B cell (primary cell): ENCODE measurements at regions of chr17 and their contacts with region 1.

Region 1: GRCh38 chr17:8057691-8058114 is 18.8 kb downstream of the ALOX15B start:
- DNase-seq: peak; percentile 87
- ATAC-seq: peak; percentile 85
- H3K4me3 ChIP-seq: no peak overlapping the region
- H3K4me3 Mint-ChIP-seq: no peak overlapping the region
- H3K27ac ChIP-seq: no peak overlapping the region
- H3K27ac Mint-ChIP-seq: no peak overlapping the region
- H3K4me1 ChIP-seq: peaks cover 22 to 25% of the 10 kb centered on the region in 2 donors
- H3K4me1 Mint-ChIP-seq: peaks cover 29% of the 10 kb centered on the region
- H3K27me3 ChIP-seq: peaks cover 0 to 24% (median 9%) of the 10 kb centered on the region in 4 experiments
- H3K27me3 Mint-ChIP-seq: peaks cover 31% of the 10 kb centered on the region
- CTCF ChIP-seq: peak; percentile 86

Region 2: DNA sequence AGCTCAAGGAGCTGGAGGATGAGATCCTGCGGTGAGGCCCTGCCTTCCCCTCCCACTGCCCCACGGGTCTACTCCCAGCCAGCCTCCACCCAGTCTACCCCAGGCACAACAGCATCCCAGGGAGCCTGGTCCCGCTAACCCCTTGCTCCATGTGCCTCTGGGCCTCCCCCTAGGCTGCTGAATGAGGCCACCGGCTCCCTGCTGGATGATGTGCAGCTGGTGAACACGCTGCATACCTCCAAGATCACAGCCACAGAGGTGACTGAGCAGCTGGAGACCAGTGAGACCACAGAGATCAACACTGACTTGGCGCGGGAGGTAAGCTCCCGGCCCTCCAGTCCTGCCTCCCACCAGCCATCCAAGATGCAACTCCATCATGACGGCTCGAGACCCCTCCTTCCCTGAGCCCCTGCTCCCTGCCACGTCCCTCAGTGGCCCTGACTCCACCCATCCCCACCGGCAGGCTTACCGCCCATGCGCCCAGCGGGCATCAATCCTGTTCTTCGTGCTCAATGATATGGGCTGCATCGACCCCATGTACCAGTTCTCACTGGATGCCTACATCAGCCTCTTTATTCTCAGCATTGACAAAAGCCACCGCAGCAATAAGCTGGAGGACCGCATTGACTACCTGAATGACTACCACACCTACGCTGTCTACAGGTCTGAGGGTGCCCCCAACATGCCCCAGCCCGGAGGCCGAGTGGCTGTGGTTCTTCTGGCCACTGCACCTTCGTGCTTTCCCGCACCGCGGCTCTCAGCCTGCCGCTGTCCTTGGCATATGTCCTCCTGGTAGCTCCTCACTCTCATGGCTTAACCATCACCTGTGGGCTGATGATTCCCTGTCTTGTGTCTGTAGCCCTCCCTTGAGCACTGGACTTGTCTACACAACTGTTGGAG is 238.7 kb before region 1 on chr17:
- CTCF ChIA-PET with region 1: interaction called, 11 read pairs
- POLR2A ChIA-PET with region 1: no interaction called
- intact Hi-C with region 1: loop called (anchors 1 kb)
- DNase-seq: no peak
- ATAC-seq: no peak
- H3K4me3 ChIP-seq: no peak overlapping the region
- H3K4me3 Mint-ChIP-seq: no peak overlapping the region
- H3K27ac ChIP-seq: no peak overlapping the region
- H3K27ac Mint-ChIP-seq: no peak overlapping the region
- H3K4me1 ChIP-seq: no peaks in the 10 kb centered on the region
- H3K4me1 Mint-ChIP-seq: no peaks in the 10 kb centered on the region
- H3K27me3 ChIP-seq: no peaks in the 10 kb centered on the region
- H3K27me3 Mint-ChIP-seq: peaks cover 8% of the 10 kb centered on the region
- CTCF ChIP-seq: no peak

Region 3: DNA sequence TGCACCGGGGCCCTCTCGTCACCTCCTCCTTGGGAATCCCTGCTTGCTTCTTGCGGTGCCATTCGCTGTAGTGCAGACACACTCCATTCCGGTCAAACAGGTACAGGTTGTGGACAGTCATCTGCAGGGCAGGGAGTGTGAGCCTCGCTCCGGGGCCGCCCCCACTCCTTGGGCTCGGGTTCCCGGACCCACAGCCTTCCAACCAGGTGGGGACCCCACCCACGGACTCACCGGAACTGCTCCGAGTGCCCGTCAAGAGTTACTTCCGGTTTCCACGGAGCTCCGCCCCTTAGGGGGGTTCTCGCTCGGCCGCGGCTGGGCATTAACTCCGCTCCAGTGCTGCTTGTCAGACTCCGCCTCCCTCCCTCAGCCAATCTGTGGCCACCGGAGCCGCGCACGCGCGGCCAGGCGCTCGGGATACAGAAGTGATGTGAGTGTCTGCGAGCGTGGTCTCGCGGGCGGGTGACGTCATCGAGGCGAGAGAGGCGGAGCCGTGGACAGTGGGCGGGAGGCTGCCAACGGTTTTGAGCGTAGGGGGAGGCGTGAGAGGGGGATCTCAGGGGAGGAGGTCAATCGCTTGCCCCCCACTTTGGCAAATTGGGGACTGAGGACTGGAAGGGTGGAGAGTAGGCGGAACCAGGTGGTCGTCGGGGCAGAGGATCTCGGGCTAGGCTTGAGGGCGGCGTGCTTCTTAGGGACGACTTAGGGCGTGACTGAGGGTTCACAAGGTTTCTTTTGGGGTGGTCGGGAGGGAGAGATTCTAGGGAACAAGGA is 125.8 kb before region 1 on chr17 and contains the starts of genes CNTROB and TRAPPC1:
- CTCF ChIA-PET with region 1: interaction called, 23 read pairs
- POLR2A ChIA-PET with region 1: no interaction called
- intact Hi-C with region 1: loop called (anchors 5 kb)
- DNase-seq: peak; percentile 100
- ATAC-seq: peak; percentile 98
- H3K4me3 ChIP-seq: peak within 1 kb of the TSS; percentile 75 to 98 (median 89)
- H3K4me3 Mint-ChIP-seq: peak within 1 kb of the TSS; percentile 95
- H3K27ac ChIP-seq: peak within 1 kb of the TSS; percentile 77 to 88
- H3K27ac Mint-ChIP-seq: peak within 1 kb of the TSS; percentile 95
- H3K4me1 ChIP-seq: peaks cover 18 to 33% of the 10 kb centered on the region in 2 donors
- H3K4me1 Mint-ChIP-seq: peaks cover 44% of the 10 kb centered on the region
- H3K27me3 ChIP-seq: no peaks in the 10 kb centered on the region
- H3K27me3 Mint-ChIP-seq: no peaks in the 10 kb centered on the region
- CTCF ChIP-seq: no peak
- total RNA-seq, gene CNTROB: 34.8 and 40.4 TPM in 2 replicates
- total RNA-seq, gene TRAPPC1: 86.0 and 118 TPM in 2 replicates

Region 4: DNA sequence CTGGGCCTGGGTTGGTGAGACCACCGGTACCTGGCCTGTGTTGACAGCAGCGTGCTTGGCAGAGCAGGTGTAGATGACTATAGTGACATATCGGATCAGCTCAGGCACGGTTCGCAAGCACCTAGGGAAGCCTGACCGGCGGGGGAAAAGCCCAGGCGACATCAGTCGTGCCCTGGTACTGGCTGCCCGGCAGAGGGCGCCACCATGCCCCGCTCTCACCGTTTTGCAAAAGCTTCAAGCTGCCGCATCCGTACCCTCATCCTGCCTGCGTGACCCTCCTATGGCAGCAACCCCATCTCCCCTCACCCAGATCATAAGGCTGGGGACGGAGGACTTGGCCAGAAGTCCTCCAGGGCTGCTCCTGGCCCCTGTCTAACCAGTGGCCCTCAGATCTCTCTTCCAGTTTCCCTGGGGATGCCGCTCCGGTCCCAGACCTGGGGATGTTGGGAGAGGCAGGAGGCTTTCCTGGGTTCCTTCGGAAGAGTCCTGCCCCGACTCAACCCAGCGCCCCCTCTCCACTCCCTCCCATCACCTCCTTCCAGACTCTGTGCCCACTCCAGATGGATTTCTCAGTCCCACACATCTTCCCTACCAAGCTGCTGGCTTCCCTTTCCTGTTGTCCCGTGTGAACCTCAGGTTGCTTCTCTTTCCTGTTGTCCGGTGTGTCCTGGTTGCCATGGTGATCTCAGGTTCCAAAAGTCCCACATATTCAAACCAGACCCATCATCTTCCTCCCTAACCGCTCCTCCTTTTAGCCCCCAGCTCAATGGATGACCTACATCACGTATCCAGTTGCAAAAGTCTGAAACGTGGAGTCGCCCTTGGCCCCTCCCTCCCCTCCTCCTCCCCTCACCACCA is 16.2 kb after region 1 on chr17:
- CTCF ChIA-PET with region 1: interaction called, 121 read pairs
- POLR2A ChIA-PET with region 1: interaction called, 4 read pairs
- intact Hi-C with region 1: loop called (anchors 1 kb)
- DNase-seq: peak; percentile 95
- ATAC-seq: peak; percentile 95
- H3K4me3 ChIP-seq: peak overlapping the region in 1 of 5 experiments; percentile 34
- H3K4me3 Mint-ChIP-seq: peak overlapping the region; percentile 81
- H3K27ac ChIP-seq: no peak overlapping the region
- H3K27ac Mint-ChIP-seq: peak overlapping the region; percentile 57
- H3K4me1 ChIP-seq: peaks cover 28 to 29% of the 10 kb centered on the region in 2 donors
- H3K4me1 Mint-ChIP-seq: peaks cover 27% of the 10 kb centered on the region
- H3K27me3 ChIP-seq: peaks cover 0 to 57% (median 39%) of the 10 kb centered on the region in 4 experiments
- H3K27me3 Mint-ChIP-seq: peaks cover 46% of the 10 kb centered on the region
- CTCF ChIP-seq: peak; percentile 95

Region 5: DNA sequence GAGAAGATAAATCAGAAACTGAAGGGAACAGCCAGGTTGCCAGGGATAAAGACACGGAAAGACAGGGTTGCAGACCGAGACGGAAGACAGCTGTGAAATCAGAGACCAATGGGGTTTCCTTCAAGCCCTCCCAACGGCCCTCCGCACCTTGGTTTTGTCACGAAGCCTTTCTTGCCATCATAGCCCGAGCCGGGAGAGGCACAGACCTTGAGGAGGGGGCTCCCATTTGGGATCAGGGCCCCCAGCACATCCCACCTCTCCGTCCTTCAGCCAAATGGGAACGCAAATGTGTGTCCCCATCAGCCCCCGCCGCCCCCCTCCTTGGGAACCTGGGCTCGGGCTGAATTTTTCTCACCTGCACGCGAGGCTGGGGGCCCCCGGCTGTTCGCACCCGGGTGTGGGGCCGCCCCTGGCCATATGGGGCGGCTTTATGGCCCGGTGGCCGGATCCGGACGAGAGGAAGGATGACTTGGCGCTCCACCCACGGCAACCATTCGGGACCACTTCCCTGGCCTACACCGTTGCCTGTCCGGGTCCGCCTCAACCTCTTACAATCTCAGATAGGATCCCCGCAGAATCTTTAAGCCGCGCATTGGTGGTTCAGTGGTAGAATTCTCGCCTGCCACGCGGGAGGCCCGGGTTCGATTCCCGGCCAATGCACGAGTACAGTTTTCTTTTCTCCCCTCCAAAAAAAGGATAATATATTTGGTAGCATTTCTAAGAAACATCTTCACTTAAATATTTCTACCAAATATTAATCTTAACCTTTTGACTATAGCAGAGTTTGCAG is 67.6 kb after region 1 on chr17:
- CTCF ChIA-PET with region 1: interaction called, 40 read pairs
- POLR2A ChIA-PET with region 1: no interaction called
- intact Hi-C with region 1: no loop called
- DNase-seq: peak; percentile 92
- ATAC-seq: peak; percentile 43
- H3K4me3 ChIP-seq: peak overlapping the region; percentile 70 to 85 (median 72)
- H3K4me3 Mint-ChIP-seq: peak overlapping the region; percentile 94
- H3K27ac ChIP-seq: no peak overlapping the region
- H3K27ac Mint-ChIP-seq: peak overlapping the region; percentile 94
- H3K4me1 ChIP-seq: peaks cover 54 to 64% of the 10 kb centered on the region in 2 donors
- H3K4me1 Mint-ChIP-seq: peaks cover 59% of the 10 kb centered on the region
- H3K27me3 ChIP-seq: peaks cover 0 to 50% (median 20%) of the 10 kb centered on the region in 4 experiments
- H3K27me3 Mint-ChIP-seq: peaks cover 34% of the 10 kb centered on the region
- CTCF ChIP-seq: no peak

Region 6: GRCh38 chr17:8312726-8313600 is 255.3 kb after region 1 on chr17:
- CTCF ChIA-PET with region 1: no interaction called
- POLR2A ChIA-PET with region 1: no interaction called
- intact Hi-C with region 1: no loop called
- DNase-seq: no peak
- ATAC-seq: no peak
- H3K4me3 ChIP-seq: no peak overlapping the region
- H3K4me3 Mint-ChIP-seq: no peak overlapping the region
- H3K27ac ChIP-seq: no peak overlapping the region
- H3K27ac Mint-ChIP-seq: no peak overlapping the region
- H3K4me1 ChIP-seq: no peaks in the 10 kb centered on the region
- H3K4me1 Mint-ChIP-seq: no peaks in the 10 kb centered on the region
- H3K27me3 ChIP-seq: peaks cover 0 to 40% (median 4%) of the 10 kb centered on the region in 4 experiments
- H3K27me3 Mint-ChIP-seq: peaks cover 31% of the 10 kb centered on the region
- CTCF ChIP-seq: no peak

Region 7: GRCh38 chr17:8785547-8786413 is 728.1 kb after region 1 on chr17:
- CTCF ChIA-PET with region 1: interaction called, 19 read pairs
- POLR2A ChIA-PET with region 1: no interaction called
- intact Hi-C with region 1: no loop called
- DNase-seq: peak; percentile 68
- ATAC-seq: no peak
- H3K4me3 ChIP-seq: no peak overlapping the region
- H3K4me3 Mint-ChIP-seq: no peak overlapping the region
- H3K27ac ChIP-seq: no peak overlapping the region
- H3K27ac Mint-ChIP-seq: no peak overlapping the region
- H3K4me1 ChIP-seq: peaks cover 3 to 6% of the 10 kb centered on the region in 2 donors
- H3K4me1 Mint-ChIP-seq: peaks cover 2% of the 10 kb centered on the region
- H3K27me3 ChIP-seq: peaks cover 0 to 6% (median 0%) of the 10 kb centered on the region in 4 experiments
- H3K27me3 Mint-ChIP-seq: peaks cover 6% of the 10 kb centered on the region
- CTCF ChIP-seq: peak; percentile 94

Region 8: DNA sequence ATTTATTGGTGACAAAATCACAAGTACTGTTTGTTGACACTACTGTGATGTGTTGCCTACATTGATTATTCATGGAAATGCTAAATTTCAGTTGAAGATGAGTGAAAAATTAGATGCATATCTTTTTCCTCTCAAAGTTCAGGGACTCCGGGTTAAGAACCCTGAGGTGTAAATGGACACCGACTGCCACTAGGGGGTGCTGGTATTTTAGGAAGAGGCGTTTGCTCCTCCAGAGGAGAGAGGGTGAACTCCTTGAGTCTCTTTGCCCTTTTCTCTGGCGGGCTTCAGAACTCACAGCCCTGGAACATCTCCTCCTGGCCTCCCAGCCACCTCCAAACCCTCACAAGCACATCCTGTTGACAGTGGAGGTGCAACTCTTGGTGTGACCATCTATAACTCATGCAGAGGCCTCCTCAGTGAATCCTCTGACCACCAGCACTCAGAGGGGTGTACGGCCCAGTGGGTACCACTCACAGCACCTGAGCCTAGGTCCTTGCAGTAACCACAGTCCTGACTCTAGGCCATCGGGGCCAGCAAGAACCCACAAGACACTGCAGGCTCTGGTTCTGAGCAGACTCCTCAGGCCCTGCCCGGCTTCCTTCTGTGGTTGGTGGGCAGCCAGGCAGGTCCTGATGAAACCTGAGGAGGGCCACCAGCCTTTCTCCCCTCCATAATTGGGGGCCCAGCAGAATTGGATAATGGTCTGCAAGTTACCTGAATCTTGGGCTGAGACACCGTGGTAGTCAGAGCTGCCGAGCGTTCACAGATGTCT is 934.0 kb after region 1 on chr17:
- CTCF ChIA-PET with region 1: no interaction called
- POLR2A ChIA-PET with region 1: no interaction called
- intact Hi-C with region 1: no loop called
- DNase-seq: peak; percentile 68
- ATAC-seq: peak; percentile 63
- H3K4me3 ChIP-seq: no peak overlapping the region
- H3K4me3 Mint-ChIP-seq: no peak overlapping the region
- H3K27ac ChIP-seq: no peak overlapping the region
- H3K27ac Mint-ChIP-seq: no peak overlapping the region
- H3K4me1 ChIP-seq: peaks cover 3 to 5% of the 10 kb centered on the region in 2 donors
- H3K4me1 Mint-ChIP-seq: peaks cover 7% of the 10 kb centered on the region
- H3K27me3 ChIP-seq: peaks cover 0 to 8% (median 2%) of the 10 kb centered on the region in 4 experiments
- H3K27me3 Mint-ChIP-seq: peaks cover 3% of the 10 kb centered on the region
- CTCF ChIP-seq: peak; percentile 80